ENCODE measurements at regions of chr19 and their contacts with region 1.

Region 1: GRCh38 chr19:10251792-10252694 is at the start of gene MRPL4:
- DNase-seq: peak; percentile 92 to 97 (median 96)
- H3K4me3 ChIP-seq: peak within 1 kb of the TSS; percentile 98
- H3K4me3 Mint-ChIP-seq: peak within 1 kb of the TSS; percentile 96 to 100 (median 99)
- H3K27ac ChIP-seq: peak within 1 kb of the TSS; percentile 87
- H3K27ac Mint-ChIP-seq: peak within 1 kb of the TSS; percentile 96 to 99 (median 97)
- H3K4me1 ChIP-seq: peaks cover 12% of the 10 kb centered on the region
- H3K4me1 Mint-ChIP-seq: peaks cover 14 to 40% (median 16%) of the 10 kb centered on the region in 3 donors
- H3K27me3 ChIP-seq: no peaks in the 10 kb centered on the region
- H3K27me3 Mint-ChIP-seq: no peaks in the 10 kb centered on the region
- total RNA-seq, gene MRPL4: 149 to 152 TPM

Region 2: DNA sequence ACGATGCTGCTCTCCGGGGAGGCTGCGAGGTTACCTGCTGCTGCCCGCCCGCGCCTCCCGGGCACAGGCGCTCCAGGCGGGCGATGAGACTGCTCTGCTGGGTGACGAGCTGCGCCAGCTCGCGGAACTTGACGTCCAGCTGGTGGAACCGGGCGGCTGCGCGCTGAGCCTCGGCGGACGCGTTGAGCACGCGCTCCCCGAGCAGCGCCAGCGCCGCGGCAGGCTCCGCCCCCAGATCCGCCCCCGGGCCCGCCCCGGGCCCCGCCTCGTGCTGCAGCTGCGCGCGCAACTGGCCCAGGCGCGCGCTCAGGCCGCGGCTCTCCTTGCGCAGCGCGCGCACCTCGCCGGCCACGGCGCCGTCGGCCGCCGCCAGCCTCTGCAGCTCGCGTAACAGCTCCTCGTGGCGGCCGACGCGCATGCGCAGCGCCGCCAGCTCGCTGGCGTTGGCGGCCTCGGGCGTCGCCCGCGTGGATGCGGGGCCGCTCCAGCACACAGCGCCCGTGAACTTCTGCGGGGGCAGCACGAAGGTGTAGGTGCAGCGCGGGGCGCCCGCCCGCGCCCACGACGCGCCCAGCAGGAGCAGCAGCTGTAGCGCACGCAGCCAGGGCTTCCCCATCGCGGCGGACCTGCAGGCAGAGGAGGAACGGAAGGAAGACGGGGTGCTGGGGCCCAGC is 156.0 kb before region 1 on chr19:
- CTCF ChIA-PET with region 1: interaction called, 10 read pairs
- POLR2A ChIA-PET with region 1: interaction called, 6 read pairs
- DNase-seq: peak; percentile 85 to 94 (median 89)
- H3K4me3 ChIP-seq: peak overlapping the region; percentile 60
- H3K4me3 Mint-ChIP-seq: peak overlapping the region in 5 of 7 donors; percentile 37 to 72 (median 60)
- H3K27ac ChIP-seq: peak overlapping the region; percentile 67
- H3K27ac Mint-ChIP-seq: peak overlapping the region in 7 of 8 donors; percentile 47 to 79 (median 66)
- H3K4me1 ChIP-seq: peaks cover 28% of the 10 kb centered on the region
- H3K4me1 Mint-ChIP-seq: peaks cover 27 to 47% (median 29%) of the 10 kb centered on the region in 3 donors
- H3K27me3 ChIP-seq: no peaks in the 10 kb centered on the region
- H3K27me3 Mint-ChIP-seq: no peaks in the 10 kb centered on the region

Region 3: GRCh38 chr19:10142701-10143375 is 109.2 kb before region 1 on chr19:
- CTCF ChIA-PET with region 1: interaction called, 11 read pairs
- POLR2A ChIA-PET with region 1: interaction called, 6 read pairs
- DNase-seq: peak; percentile 23 to 72 (median 67)
- H3K4me3 ChIP-seq: peak overlapping the region; percentile 49
- H3K4me3 Mint-ChIP-seq: peak overlapping the region; percentile 31 to 88 (median 80)
- H3K27ac ChIP-seq: peak overlapping the region; percentile 71
- H3K27ac Mint-ChIP-seq: peak overlapping the region; percentile 95 to 100 (median 98)
- H3K4me1 ChIP-seq: peaks cover 61% of the 10 kb centered on the region
- H3K4me1 Mint-ChIP-seq: peaks cover 31 to 62% (median 48%) of the 10 kb centered on the region in 3 donors
- H3K27me3 ChIP-seq: no peaks in the 10 kb centered on the region
- H3K27me3 Mint-ChIP-seq: no peaks in the 10 kb centered on the region

Region 4: DNA sequence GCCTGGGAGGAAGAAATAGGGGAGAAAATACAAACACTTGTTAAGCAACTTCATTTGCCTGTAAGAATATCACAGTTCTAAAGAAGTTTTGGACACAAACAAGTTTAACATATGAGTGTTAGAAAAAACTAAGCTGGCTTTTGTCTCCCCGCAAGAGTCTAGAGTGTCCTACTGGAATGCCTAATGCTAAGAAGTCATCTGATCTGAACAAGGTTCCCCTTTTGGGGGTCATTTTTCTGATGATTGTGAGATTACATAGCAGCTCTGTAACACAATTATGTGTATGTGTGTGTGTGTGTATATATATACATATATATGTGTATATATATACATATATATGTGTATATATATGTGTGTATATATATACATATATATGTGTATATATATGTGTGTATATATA is 70.0 kb before region 1 on chr19:
- CTCF ChIA-PET with region 1: no interaction called
- POLR2A ChIA-PET with region 1: no interaction called
- DNase-seq: no peak
- H3K4me3 ChIP-seq: no peak overlapping the region
- H3K4me3 Mint-ChIP-seq: no peak overlapping the region
- H3K27ac ChIP-seq: no peak overlapping the region
- H3K27ac Mint-ChIP-seq: peak overlapping the region in 2 of 8 donors; percentile 24 to 32
- H3K4me1 ChIP-seq: no peaks in the 10 kb centered on the region
- H3K4me1 Mint-ChIP-seq: peaks cover 8 to 18% (median 16%) of the 10 kb centered on the region in 3 donors
- H3K27me3 ChIP-seq: no peaks in the 10 kb centered on the region
- H3K27me3 Mint-ChIP-seq: peaks cover 0 to 1% of the 10 kb centered on the region in 2 donors

Region 5: DNA sequence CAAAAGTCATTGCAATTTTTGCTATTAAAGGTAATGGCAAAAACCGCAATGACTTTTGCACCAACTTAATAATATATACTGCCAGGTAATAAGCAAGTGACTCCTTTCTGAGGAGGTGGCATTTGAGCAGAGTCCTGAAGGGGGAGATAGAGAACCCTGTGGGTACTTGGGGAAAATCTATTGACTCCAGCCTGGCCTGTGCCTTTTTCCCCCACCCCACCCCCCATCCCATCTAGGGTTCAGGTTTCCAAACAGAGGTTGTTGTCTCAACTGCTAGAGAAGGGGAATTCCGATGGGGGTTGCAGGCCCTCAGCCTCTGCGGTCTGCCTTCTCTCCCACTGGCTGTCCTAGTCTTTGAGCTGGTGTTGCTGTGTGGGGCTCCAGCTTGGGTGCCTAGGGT is 32.4 kb before region 1 on chr19:
- CTCF ChIA-PET with region 1: interaction called, 73 read pairs
- POLR2A ChIA-PET with region 1: no interaction called
- DNase-seq: peak in 4 of 5 donors; percentile 7 to 48 (median 23)
- H3K4me3 ChIP-seq: no peak overlapping the region
- H3K4me3 Mint-ChIP-seq: no peak overlapping the region
- H3K27ac ChIP-seq: no peak overlapping the region
- H3K27ac Mint-ChIP-seq: peak overlapping the region in 1 of 8 donors; percentile 69
- H3K4me1 ChIP-seq: peaks cover 4% of the 10 kb centered on the region
- H3K4me1 Mint-ChIP-seq: peaks cover 1 to 4% (median 4%) of the 10 kb centered on the region in 3 donors
- H3K27me3 ChIP-seq: no peaks in the 10 kb centered on the region
- H3K27me3 Mint-ChIP-seq: no peaks in the 10 kb centered on the region

Region 6: DNA sequence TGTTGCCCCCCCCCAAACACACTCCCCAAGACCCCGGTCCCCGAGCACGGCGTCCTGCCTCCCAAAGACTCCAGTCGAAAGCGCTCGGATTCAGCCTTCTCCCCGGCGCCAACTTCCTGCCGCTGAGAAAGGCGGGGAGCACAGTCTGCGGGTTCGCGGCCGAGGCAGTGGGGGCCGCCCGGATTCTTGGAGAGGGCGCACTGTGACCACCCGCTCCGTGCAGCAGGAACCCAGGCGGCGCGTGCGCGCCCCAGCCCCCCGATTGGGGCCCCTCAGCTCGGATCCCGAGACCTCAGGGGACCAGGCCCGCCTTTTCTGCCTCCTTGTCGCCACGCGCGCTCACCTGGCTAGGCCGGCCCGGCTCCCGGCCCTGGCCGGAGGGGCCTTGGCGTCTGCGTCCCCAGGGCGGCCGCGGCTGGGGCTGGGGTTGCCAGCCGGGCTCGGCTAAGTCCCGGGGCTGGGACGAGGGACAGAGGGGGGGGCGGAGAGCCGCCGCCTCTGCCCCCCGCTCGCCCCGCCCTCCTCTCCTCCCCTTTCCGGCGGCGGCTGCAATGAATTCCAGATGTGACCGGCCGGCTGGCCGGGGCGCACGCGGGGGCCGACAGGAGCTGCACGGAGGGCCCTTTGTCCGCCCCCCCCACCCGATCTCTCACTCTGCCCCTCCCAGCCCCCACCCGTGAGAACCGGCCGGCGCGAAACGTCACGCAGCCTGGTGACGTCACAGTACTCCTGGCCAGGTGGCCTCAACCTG is 21.0 kb before region 1 on chr19 and contains the start of gene S1PR2:
- CTCF ChIA-PET with region 1: interaction called, 73 read pairs
- POLR2A ChIA-PET with region 1: interaction called, 4 read pairs
- DNase-seq: peak; percentile 56 to 81 (median 68)
- H3K4me3 ChIP-seq: peak within 1 kb of the TSS; percentile 79
- H3K4me3 Mint-ChIP-seq: peak within 1 kb of the TSS; percentile 85 to 97 (median 90)
- H3K27ac ChIP-seq: peak within 1 kb of the TSS; percentile 88
- H3K27ac Mint-ChIP-seq: peak within 1 kb of the TSS; percentile 77 to 99 (median 92)
- H3K4me1 ChIP-seq: peaks cover 31% of the 10 kb centered on the region
- H3K4me1 Mint-ChIP-seq: peaks cover 19 to 37% (median 31%) of the 10 kb centered on the region in 3 donors
- H3K27me3 ChIP-seq: no peaks in the 10 kb centered on the region
- H3K27me3 Mint-ChIP-seq: no peaks in the 10 kb centered on the region
- total RNA-seq, gene S1PR2: 18.4 to 19.9 TPM

Region 7: GRCh38 chr19:10238172-10238783 is 13.8 kb before region 1 on chr19:
- CTCF ChIA-PET with region 1: interaction called, 31 read pairs
- POLR2A ChIA-PET with region 1: interaction called, 4 read pairs
- DNase-seq: no peak
- H3K4me3 ChIP-seq: no peak overlapping the region
- H3K4me3 Mint-ChIP-seq: peak overlapping the region in 3 of 7 donors; percentile 3 to 86 (median 27)
- H3K27ac ChIP-seq: no peak overlapping the region
- H3K27ac Mint-ChIP-seq: peak overlapping the region in 5 of 8 donors; percentile 29 to 89 (median 80)
- H3K4me1 ChIP-seq: peaks cover 17% of the 10 kb centered on the region
- H3K4me1 Mint-ChIP-seq: peaks cover 16 to 22% (median 19%) of the 10 kb centered on the region in 3 donors
- H3K27me3 ChIP-seq: no peaks in the 10 kb centered on the region
- H3K27me3 Mint-ChIP-seq: peaks cover 0 to 1% of the 10 kb centered on the region in 2 donors

Region 8: DNA sequence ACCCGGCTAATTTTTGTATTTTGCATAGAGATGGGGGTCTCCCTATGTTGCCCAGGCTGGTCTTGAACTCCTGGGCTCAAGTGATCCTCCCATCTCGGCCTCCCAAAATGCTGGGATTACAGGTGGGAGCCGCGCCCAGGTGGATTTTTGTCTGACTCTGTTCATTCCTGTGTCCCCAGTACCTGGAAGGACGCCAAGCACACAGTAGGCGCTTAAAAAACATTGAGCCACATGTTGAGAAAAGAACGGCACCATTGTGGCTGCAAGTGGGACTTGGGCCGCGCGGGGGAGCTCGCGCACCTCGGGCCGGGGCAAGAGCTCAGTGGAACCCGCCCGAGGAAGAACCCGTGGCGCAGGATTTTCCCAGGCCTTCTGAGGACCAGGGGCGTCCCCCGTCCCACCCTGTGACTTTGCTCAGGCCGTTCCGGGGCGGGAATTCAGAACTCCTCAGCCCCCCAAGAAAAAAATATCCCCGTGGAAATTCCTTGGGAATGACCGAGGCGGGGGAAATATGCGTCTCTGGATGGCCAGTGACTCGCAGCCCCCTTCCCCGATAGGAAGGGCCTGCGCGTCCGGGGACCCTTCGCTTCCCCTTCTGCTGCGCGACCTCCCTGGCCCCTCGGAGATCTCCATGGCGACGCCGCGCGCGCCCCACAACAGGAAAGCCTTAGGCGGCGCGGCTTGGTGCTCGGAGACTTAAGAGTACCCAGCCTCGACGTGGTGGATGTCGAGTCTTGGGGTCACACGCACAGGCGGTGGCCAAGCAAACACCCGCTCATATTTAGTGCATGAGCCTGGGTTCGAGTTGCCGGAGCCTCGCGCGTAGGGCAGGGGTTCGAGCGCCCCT is 17.5 kb after region 1 on chr19:
- CTCF ChIA-PET with region 1: interaction called, 14 read pairs
- POLR2A ChIA-PET with region 1: no interaction called
- DNase-seq: peak; percentile 81 to 90 (median 83)
- H3K4me3 ChIP-seq: peak overlapping the region; percentile 76
- H3K4me3 Mint-ChIP-seq: peak overlapping the region; percentile 83 to 94 (median 87)
- H3K27ac ChIP-seq: peak overlapping the region; percentile 87
- H3K27ac Mint-ChIP-seq: peak overlapping the region; percentile 90 to 99 (median 95)
- H3K4me1 ChIP-seq: peaks cover 21% of the 10 kb centered on the region
- H3K4me1 Mint-ChIP-seq: peaks cover 26 to 43% (median 28%) of the 10 kb centered on the region in 3 donors
- H3K27me3 ChIP-seq: no peaks in the 10 kb centered on the region
- H3K27me3 Mint-ChIP-seq: peaks cover 0 to 1% of the 10 kb centered on the region in 2 donors

Region 9: DNA sequence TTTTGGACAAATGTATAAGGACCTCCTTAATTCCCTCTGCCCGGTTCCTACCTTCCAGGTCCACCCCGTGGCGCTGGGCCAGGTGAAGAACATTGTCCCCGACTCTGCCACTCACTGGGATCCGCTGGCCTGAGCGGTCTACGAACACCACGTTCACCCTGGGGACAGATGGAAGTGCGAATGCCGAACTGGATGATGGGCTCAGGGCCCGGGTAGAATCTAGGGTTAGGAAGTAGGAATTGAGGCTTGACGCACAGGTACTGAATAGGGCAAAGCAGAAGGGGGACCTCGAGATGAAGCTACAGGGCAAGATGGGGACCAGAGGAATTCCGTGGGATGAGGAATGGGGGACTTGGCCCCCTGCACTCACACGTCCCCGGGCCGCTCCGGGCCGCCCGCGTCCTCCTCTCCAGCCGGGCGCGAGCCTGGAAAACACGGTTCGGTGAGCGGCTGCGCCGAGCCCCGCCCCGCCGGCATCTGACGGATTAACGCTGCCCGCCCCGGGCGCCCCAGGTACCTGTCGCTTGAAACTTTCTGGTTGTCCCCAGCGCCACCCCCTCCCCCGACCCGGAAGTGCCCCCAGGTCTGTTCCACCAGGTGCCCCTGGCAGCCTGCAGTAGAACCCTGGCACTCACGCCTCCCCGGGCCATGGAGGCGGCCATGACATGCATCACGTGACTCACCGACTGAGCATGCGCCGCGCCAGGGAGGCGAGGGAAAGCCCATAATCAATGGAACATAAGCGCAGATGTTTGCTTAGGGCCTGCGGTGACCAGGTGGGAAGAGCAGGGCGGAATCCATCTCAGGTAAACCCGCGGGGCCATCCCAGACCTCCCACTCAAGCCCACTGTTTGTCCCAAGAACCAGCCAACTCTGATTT is 63.5 kb after region 1 on chr19 and contains the start of gene FDX2:
- CTCF ChIA-PET with region 1: no interaction called
- POLR2A ChIA-PET with region 1: no interaction called
- DNase-seq: peak; percentile 81 to 93 (median 90)
- H3K4me3 ChIP-seq: peak within 1 kb of the TSS; percentile 74
- H3K4me3 Mint-ChIP-seq: peak within 1 kb of the TSS; percentile 43 to 94 (median 87)
- H3K27ac ChIP-seq: peak within 1 kb of the TSS; percentile 33
- H3K27ac Mint-ChIP-seq: peak within 1 kb of the TSS; percentile 47 to 95 (median 88)
- H3K4me1 ChIP-seq: peaks cover 4% of the 10 kb centered on the region
- H3K4me1 Mint-ChIP-seq: peaks cover 12 to 20% (median 19%) of the 10 kb centered on the region in 3 donors
- H3K27me3 ChIP-seq: no peaks in the 10 kb centered on the region
- H3K27me3 Mint-ChIP-seq: no peaks in the 10 kb centered on the region
- total RNA-seq, gene FDX2: 29.6 to 30.0 TPM

Region 10: GRCh38 chr19:10450853-10451609 is 199.0 kb after region 1 on chr19:
- CTCF ChIA-PET with region 1: no interaction called
- POLR2A ChIA-PET with region 1: no interaction called
- DNase-seq: no peak
- H3K4me3 ChIP-seq: no peak overlapping the region
- H3K4me3 Mint-ChIP-seq: no peak overlapping the region
- H3K27ac ChIP-seq: no peak overlapping the region
- H3K27ac Mint-ChIP-seq: no peak overlapping the region
- H3K4me1 ChIP-seq: no peaks in the 10 kb centered on the region
- H3K4me1 Mint-ChIP-seq: peaks cover 2 to 12% (median 4%) of the 10 kb centered on the region in 3 donors
- H3K27me3 ChIP-seq: no peaks in the 10 kb centered on the region
- H3K27me3 Mint-ChIP-seq: peaks cover 0 to 2% of the 10 kb centered on the region in 2 donors